OCI-LY7 (cell line): ENCODE measurements at regions of chr22 and their contacts with region 1.

Region 1: GRCh38 chr22:24433813-24434470 is 6.5 kb downstream of the ADORA2A start:
- DNase-seq: peak; percentile 92
- H3K4me3 ChIP-seq: peak overlapping the region; percentile 61
- H3K27ac ChIP-seq: peak overlapping the region; percentile 99
- H3K4me1 ChIP-seq: peaks cover 98% of the 10 kb centered on the region
- CTCF ChIP-seq: no peak

Region 2: GRCh38 chr22:24270638-24271408 is 163.1 kb before region 1 on chr22 and contains the start of gene SPECC1L:
- CTCF ChIA-PET with region 1: no interaction called
- POLR2A ChIA-PET with region 1: no interaction called
- intact Hi-C with region 1: loop called (anchors 2 kb)
- DNase-seq: peak; percentile 93
- H3K4me3 ChIP-seq: peak within 1 kb of the TSS; percentile 95
- H3K27ac ChIP-seq: peak within 1 kb of the TSS; percentile 71
- H3K4me1 ChIP-seq: peaks cover 30% of the 10 kb centered on the region
- CTCF ChIP-seq: no peak
- total RNA-seq, gene SPECC1L: 42.4 and 47.0 TPM in 2 replicates

Region 3: DNA sequence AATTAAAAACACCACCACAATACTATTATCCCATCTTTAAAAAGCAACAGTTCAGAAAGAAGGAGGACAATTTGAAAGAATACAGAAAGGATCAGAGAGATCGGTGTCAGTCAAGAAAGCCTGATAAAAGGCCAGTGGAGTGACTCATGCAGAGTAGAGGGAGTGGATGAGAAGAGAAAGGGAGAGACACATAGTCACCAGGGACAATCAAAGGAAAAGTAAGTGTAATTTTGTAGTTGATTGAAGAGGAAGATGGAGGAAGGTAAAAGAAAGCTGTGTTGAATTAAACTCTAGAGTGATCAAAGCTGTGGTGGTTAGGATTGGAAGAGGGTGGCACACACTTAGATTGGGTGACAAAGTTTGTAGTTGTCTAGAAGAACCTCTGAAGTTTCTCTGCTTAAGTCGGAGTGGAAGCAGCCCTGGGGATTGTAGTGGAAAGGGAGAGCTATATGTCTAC is 149.2 kb before region 1 on chr22:
- CTCF ChIA-PET with region 1: no interaction called
- POLR2A ChIA-PET with region 1: no interaction called
- intact Hi-C with region 1: no loop called
- DNase-seq: no peak
- H3K4me3 ChIP-seq: no peak overlapping the region
- H3K27ac ChIP-seq: no peak overlapping the region
- H3K4me1 ChIP-seq: peaks cover 7% of the 10 kb centered on the region
- CTCF ChIP-seq: no peak

Region 4: DNA sequence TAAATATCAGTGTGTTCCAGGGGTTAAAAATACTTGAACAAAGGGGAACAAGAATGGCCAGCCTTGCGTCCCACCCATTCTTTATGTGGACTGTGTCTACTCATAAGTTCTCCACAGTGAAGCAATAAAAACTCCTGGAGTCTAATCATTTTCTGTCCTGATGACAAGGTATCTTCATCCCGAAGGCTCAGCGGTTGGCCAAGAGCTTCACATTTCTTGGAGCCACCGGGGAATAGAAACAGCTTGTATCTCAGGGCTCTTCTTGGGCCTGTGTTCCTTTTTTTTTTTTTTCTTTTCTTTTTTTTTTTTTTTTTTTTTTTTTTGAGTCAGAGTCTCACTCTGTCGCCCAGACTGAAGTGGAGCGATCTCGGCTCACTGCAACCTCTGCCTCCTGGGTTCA is 43.4 kb before region 1 on chr22:
- CTCF ChIA-PET with region 1: no interaction called
- POLR2A ChIA-PET with region 1: no interaction called
- intact Hi-C with region 1: no loop called
- DNase-seq: no peak
- H3K4me3 ChIP-seq: no peak overlapping the region
- H3K27ac ChIP-seq: no peak overlapping the region
- H3K4me1 ChIP-seq: no peaks in the 10 kb centered on the region
- CTCF ChIP-seq: no peak

Region 5: GRCh38 chr22:24482575-24482974 is 48.6 kb after region 1 on chr22:
- CTCF ChIA-PET with region 1: interaction called, 3 read pairs
- POLR2A ChIA-PET with region 1: interaction called, 10 read pairs
- intact Hi-C with region 1: no loop called
- DNase-seq: no peak
- H3K4me3 ChIP-seq: no peak overlapping the region
- H3K27ac ChIP-seq: no peak overlapping the region
- H3K4me1 ChIP-seq: peaks cover 6% of the 10 kb centered on the region
- CTCF ChIP-seq: no peak

Region 6: DNA sequence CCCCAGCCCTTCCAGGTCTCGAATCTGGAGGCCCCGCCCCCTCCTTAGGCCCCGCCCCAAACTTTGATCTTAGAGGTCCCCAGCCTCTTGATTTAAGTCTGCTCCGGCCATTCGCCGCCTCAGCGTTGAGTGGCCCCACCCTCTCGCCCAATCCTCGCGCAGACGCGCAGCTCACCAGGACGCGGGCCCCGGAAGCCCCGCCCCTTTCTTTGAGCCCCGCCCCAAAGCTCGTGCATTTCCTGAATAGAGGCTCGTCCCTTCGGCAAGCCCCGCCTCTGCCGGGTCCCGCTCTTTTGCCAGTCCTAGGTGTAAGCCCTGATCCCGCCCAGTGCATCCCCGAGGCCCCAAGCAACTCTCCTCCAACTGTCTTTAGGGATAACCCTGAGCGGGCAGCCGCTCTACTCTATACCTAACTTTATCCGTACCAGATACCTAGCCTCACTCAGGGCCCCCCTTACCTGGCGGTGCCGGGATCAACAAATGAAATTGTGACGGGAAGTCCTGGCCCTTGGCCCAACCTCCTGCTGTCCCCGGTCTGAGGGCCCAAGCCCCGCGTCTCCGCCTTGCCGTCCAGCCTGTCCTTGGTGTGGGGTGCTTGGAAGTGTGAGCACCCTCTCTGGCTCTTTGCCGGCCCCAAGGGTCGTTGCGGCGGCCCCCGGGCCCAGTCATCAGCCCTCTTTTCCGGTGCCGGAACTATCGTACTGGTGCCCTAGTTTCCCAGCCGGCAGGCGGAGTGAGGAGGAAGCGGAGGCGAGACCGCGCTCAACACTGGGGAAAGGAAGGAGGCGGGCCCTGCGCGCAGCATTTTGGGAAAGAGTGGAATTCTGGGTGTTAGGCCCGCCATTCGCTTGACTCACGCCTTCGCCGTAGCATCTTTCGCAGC is 121.5 kb after region 1 on chr22 and contains the start of gene SNRPD3:
- CTCF ChIA-PET with region 1: no interaction called
- POLR2A ChIA-PET with region 1: interaction called, 7 read pairs
- intact Hi-C with region 1: loop called (anchors 1 kb)
- DNase-seq: peak; percentile 99
- H3K4me3 ChIP-seq: peak within 1 kb of the TSS; percentile 96
- H3K27ac ChIP-seq: peak within 1 kb of the TSS; percentile 87
- H3K4me1 ChIP-seq: peaks cover 65% of the 10 kb centered on the region
- CTCF ChIP-seq: no peak
- total RNA-seq, gene SNRPD3: 264 and 278 TPM in 2 replicates

Region 7: DNA sequence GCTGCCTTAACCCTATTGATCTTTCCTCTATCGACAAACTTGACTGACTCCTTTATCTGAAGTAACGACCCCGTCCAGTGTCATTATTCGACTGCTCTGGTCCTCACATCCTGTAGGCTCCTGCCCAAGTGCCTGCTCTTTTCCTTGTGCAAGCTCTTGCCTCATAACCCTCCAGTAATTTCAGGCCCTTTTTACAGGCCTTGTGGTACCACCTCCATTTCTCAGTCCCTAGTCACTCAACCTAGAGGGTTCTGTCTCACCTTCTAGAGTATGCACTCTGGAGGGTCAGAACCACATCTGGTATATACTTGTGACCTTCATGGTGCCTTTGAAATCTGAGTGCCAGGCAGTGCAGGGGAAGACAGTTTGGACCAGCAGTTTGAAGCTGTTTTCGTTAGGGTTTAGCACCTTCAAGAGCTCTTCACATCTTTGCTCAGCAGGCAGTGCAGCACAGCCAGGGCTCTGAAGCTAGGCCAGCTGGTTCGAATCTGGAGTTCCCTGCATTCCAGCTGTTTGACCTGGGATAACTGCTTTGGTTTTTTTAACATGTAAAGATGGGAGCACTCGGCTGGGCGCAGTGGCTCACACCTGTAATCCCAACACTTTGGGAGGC is 133.1 kb after region 1 on chr22:
- CTCF ChIA-PET with region 1: no interaction called
- POLR2A ChIA-PET with region 1: no interaction called
- intact Hi-C with region 1: no loop called
- DNase-seq: no peak
- H3K4me3 ChIP-seq: no peak overlapping the region
- H3K27ac ChIP-seq: no peak overlapping the region
- H3K4me1 ChIP-seq: no peaks in the 10 kb centered on the region
- CTCF ChIP-seq: no peak